Dorsolateral prefrontal cortex (tissue), 120 donors: ENCODE measurements at regions of chr6 and their contacts with region 1.

Region 1: DNA sequence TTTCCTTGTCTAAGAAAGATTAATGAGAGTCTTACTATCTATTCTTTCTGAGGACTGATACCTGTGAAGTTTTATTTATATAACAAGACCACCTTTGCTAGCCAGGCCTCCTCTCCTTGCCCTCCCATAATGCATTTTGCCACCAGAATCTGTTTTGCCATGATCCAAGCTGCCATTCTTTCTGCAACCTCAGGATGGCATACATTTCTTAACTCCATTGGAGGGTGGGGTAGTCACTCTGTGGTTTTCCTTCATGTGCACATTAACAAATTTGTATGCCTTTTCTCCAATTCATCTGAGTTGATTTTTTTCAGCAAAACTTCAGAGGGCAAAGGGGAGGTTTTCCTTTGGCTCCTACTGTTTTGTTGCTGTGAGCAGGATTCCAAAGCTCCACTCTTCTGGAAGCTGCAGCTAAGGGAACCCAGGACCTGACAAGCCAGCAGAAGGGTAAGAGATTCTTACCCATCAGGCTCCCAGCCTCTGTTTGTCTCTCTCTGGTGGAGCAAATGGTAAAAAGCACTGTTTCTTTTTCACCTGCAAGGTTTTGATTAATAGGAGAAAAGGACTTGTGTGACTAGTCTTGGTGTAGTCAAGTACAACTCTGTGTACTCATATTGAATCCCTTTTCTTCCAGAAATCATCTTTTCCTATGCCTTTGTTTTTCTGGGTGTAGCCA is 26.2 kb upstream of the ENPP4 start:
- DNase-seq: no peak
- H3K4me3 ChIP-seq: no peak overlapping the region
- H3K27ac ChIP-seq: peak overlapping the region in 7 of 59 donors; percentile 2 to 52 (median 10)
- H3K27me3 ChIP-seq: no peaks in the 10 kb centered on the region
- CTCF ChIP-seq: peak in 25 of 56 donors; percentile 9 to 41 (median 25)

Region 2: GRCh38 chr6:45997875-45998506 is 105.6 kb before region 1 on chr6:
- intact Hi-C with region 1: no loop called
- DNase-seq: no peak
- H3K4me3 ChIP-seq: no peak overlapping the region
- H3K27ac ChIP-seq: no peak overlapping the region
- H3K27me3 ChIP-seq: no peaks in the 10 kb centered on the region
- CTCF ChIP-seq: no peak

Region 3: DNA sequence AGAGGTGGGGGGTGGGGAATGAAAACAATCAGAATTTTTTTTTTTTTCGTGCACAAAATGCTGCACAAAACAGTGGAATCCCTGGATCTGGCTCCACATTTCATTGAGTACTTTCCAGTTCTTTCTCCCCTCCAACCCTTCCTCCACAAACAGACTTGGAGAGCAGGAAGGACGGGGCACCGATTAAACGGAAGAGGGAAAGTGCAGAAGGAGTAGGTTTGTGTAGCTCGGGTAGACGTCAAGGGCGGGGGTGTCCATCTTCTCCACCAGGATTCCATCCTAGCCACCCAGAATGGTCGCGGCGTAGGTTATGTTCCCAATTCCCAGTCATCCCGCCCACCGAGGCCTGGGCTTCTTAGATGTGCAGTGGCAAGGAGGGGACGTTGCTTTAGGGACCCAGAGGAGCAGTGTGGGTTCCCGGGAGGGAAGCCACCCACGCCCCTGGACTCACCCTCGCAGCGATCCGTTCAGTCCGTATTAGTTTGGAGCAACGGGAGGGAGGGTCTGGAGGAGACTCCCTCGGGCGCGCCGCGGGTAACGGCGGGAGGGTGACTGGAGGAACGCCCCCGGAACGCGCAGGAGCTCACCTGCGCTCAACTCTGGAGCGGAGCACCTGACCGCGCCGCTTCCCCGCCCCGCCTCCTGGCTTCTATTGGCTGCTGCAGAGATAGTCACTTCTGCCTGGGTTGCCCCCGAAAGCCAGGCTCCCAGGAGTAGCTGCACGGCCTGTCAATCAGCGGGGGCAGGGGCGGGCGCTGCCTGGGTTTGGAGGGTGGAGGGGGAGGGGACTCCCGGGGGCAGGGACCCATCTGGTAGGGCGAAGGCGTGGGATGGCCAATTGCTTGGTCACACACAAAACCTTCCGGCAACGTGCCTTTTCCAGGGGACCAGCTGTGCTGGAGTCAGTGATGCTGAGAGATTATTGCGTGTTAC is 67.0 kb after region 1 on chr6 and contains the start of gene ENPP5:
- intact Hi-C with region 1: loop called in 1 of 2 experiments (anchors 5 kb)
- DNase-seq: peak; percentile 82 to 98 (median 94)
- H3K4me3 ChIP-seq: peak within 1 kb of the TSS; percentile 66 to 99 (median 87)
- H3K27ac ChIP-seq: peak within 1 kb of the TSS in 54 of 59 donors; percentile 18 to 87 (median 70)
- H3K27me3 ChIP-seq: no peaks in the 10 kb centered on the region
- CTCF ChIP-seq: peak in 7 of 56 donors; percentile 6 to 33 (median 19)
- total RNA-seq, gene ENPP5: 13.8 to 56.1 (median 36.0) TPM

Region 4: DNA sequence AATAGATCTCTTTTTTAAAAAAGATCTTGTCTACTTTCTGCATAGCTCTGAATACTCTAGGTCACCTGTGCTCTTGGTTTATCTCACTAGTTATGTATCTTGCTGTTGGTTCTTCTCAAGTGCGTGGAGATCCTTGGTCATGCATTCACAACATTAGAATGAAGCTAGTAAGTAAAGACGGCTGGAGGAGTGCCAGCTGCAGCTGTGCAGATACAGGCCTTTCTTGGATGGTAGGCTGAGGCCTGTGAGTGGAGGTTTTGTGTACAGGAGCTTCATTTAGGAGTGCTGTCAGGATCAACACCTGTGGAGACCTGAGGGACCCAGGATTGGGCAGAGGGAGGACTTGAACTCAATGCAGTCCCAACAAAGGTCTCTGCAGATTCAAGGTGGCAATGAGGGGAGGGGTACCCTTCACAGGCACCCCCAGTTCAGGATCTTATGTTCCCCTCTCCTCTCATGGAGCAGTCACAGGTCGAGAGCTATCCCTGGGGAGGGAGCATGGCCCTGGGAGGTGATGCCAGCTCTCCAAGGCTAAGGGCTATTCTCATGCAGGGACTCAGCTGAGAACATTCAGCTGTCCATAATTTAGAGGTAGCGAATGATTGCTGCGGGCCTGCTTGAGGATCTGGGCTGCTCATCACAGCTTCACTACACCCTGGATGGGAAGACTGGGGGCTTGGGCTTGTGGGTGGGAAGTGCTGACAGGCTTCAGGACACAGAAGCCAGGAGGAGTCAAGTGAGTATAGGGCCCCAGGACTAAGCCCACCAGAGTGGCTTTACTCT is 166.1 kb after region 1 on chr6:
- intact Hi-C with region 1: loop called in 1 of 2 experiments (anchors 5 kb)
- DNase-seq: peak in 8 of 10 donors; percentile 41 to 78 (median 58)
- H3K4me3 ChIP-seq: no peak overlapping the region
- H3K27ac ChIP-seq: peak overlapping the region in 47 of 59 donors; percentile 0 to 72 (median 48)
- H3K27me3 ChIP-seq: no peaks in the 10 kb centered on the region
- CTCF ChIP-seq: no peak

Region 5: DNA sequence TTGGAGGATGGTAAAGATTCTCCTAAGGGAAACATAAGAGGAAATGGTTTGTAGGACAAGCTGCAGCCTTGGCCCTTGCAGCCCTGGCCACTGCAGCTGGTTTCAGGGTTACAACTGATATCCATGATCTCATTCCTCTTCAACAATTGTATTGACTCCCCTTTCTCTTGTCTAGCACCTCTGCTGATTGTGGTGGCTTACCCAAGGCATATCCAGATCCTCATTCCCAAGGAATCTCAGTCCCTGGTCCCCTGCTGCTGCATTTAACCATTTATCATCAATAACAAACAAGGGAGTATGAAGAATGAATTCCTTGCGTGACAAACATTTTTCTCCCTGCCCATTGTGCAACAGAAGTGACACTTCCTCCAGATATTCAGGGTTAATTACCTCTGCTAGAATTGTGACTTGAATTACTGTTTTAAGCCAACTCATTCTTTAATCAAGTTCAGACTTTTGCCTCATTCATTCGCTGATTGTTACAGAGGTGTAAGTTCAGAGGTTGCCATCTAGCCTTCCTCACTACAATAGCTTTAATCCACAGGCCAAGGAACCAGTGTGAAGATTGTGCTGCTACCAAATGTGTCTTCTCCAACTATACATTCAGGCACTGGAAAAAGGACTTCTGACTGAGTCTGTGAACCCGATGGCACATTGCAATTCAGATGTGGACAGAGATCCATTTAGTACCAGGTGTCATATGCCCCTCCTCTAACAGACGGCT is 1049.6 kb after region 1 on chr6:
- intact Hi-C with region 1: no loop called
- DNase-seq: no peak
- H3K4me3 ChIP-seq: no peak overlapping the region
- H3K27ac ChIP-seq: no peak overlapping the region
- H3K27me3 ChIP-seq: peaks cover 0 to 6% (median 0%) of the 10 kb centered on the region in 45 donors
- CTCF ChIP-seq: no peak